MCF 10A (cell line): ENCODE measurements at regions of chr16 and their contacts with region 1.

Region 1: GRCh38 chr16:86590501-86591144 is 12.3 kb downstream of the FOXL1 start:
- DNase-seq: peak; percentile 75
- H3K4me3 Mint-ChIP-seq: no peak overlapping the region
- H3K27ac Mint-ChIP-seq: peak overlapping the region; percentile 47
- H3K4me1 Mint-ChIP-seq: peaks cover 3% of the 10 kb centered on the region
- H3K27me3 Mint-ChIP-seq: no peaks in the 10 kb centered on the region
- CTCF ChIP-seq: no peak

Region 2: DNA sequence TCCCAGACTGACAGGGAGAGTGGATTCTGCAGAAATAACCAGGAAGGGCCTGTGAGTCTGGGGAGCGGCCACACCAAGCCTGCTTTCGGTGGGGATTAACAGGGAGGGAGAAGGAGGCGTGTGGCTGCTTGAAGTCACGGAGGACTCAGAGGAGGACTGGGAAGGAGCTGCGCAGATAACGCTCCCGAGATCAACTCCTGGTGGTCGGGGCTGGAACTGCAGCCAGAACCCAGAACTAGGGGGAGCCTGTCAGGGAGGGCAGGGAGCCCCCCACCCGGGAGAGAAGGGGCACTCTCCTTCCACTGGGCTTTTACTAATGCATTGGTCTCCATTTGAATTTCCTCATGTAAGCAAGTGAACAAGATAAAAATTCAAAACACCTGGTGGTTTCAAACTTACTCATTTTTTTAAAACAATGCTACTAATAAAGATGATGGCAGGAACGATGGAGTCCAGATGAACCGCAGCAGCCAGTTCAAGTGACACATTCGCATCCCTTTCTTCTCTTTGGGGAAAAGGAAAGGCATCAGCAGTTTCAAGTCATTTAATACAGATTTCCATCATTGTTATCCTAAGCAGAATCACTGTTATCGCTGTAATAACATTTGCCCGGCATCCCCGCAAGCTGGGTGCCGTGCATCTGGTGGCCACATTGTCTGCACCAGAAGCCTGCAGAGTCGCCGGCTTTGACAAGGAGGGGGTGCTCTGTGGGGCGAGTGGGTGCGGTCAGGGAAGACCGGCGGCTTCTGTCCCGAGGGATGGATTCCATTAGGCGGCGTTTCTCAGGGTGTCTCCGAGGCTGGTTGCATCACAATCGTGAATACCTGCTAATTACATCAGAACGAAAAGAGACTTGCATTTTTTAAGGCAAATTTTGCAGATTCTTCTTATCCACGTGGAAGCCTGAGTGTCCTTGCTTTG is 170.7 kb after region 1 on chr16:
- CTCF ChIA-PET with region 1: no interaction called
- POLR2A ChIA-PET with region 1: no interaction called
- intact Hi-C with region 1: loop called (anchors 5 kb)
- DNase-seq: peak; percentile 83
- H3K4me3 Mint-ChIP-seq: peak overlapping the region; percentile 60
- H3K27ac Mint-ChIP-seq: no peak overlapping the region
- H3K4me1 Mint-ChIP-seq: peaks cover 14% of the 10 kb centered on the region
- H3K27me3 Mint-ChIP-seq: no peaks in the 10 kb centered on the region
- CTCF ChIP-seq: peak; percentile 86